ENCODE measurements at regions of chr6 and their contacts with region 1.

Region 1: GRCh38 chr6:167872538-167873210 is 46.0 kb downstream of the AFDN start:
- DNase-seq: no peak
- ATAC-seq: no peak
- H3K4me3 ChIP-seq: no peak overlapping the region
- H3K4me3 Mint-ChIP-seq: no peak overlapping the region
- H3K27ac ChIP-seq: no peak overlapping the region
- H3K27ac Mint-ChIP-seq: no peak overlapping the region
- H3K4me1 ChIP-seq: no peaks in the 10 kb centered on the region
- H3K4me1 Mint-ChIP-seq: no peaks in the 10 kb centered on the region
- H3K27me3 ChIP-seq: peaks cover 0 to 3% of the 10 kb centered on the region in 2 experiments
- H3K27me3 Mint-ChIP-seq: no peaks in the 10 kb centered on the region

Region 2: GRCh38 chr6:167750956-167751386 is 121.7 kb before region 1 on chr6:
- CTCF ChIA-PET with region 1: no interaction called
- POLR2A ChIA-PET with region 1: no interaction called
- DNase-seq: no peak
- ATAC-seq: no peak
- H3K4me3 ChIP-seq: no peak overlapping the region
- H3K4me3 Mint-ChIP-seq: no peak overlapping the region
- H3K27ac ChIP-seq: no peak overlapping the region
- H3K27ac Mint-ChIP-seq: no peak overlapping the region
- H3K4me1 ChIP-seq: no peaks in the 10 kb centered on the region
- H3K4me1 Mint-ChIP-seq: no peaks in the 10 kb centered on the region
- H3K27me3 ChIP-seq: peaks cover 0 to 19% of the 10 kb centered on the region in 2 experiments
- H3K27me3 Mint-ChIP-seq: peaks cover 10 to 16% of the 10 kb centered on the region in 2 donors

Region 3: DNA sequence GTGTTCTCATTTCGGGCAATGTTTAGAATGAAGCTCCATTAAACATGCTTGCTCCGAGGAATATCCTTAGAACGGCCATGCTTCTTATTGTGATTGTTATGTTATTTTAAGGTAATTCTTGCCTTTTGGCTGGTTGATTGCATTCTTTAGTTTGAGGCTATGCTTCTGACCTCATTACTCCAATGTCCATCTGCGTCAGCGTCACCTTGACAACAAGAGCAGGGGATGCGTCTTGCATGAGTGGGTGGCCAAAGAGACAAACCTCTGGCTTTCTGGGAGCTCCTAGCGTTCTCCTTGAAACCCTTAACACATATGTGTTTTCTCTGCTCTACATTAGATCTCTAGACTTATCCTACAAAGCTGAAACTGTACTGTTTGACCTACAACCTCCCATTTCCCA is 1196.7 kb after region 1 on chr6:
- CTCF ChIA-PET with region 1: no interaction called
- POLR2A ChIA-PET with region 1: interaction called in 1 of 2 experiments, 15 read pairs
- DNase-seq: no peak
- ATAC-seq: no peak
- H3K4me3 ChIP-seq: no peak overlapping the region
- H3K4me3 Mint-ChIP-seq: no peak overlapping the region
- H3K27ac ChIP-seq: no peak overlapping the region
- H3K27ac Mint-ChIP-seq: no peak overlapping the region
- H3K4me1 ChIP-seq: no peaks in the 10 kb centered on the region
- H3K4me1 Mint-ChIP-seq: no peaks in the 10 kb centered on the region
- H3K27me3 ChIP-seq: peaks cover 0 to 7% of the 10 kb centered on the region in 2 experiments
- H3K27me3 Mint-ChIP-seq: peaks cover 8% of the 10 kb centered on the region in 2 donors